HepG2 (cell line): ENCODE measurements at regions of chr14 and their contacts with region 1.

Region 1: DNA sequence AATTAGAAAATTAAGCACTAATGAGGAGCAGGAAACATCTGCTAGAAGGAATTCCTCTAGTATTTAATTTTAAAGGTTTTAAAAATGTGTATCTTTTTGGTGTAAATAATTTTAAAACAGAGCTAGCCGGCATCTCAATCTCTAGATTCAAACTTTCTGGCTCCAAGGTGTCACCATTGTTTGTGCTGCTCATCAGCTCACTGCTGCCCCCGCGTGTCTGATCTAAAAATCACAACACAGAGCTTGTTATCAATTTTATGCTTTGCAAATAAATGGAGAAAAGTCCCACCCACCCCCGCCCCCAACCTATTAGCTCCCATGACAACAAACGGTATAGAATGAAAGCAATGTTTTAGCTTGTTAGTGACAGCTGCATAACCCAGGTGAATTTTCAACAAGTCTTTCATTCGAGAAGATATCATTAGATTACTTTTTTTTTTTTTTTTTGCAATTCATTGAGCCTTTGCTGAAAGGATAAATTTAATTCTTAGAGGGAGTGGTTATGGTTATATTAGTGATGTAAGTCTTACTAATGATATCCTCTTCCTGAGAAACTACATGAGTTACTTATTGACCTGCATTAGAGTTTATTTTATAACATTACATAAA is 11.3 kb upstream of the ABHD12B start:
- DNase-seq: peak; percentile 66
- ATAC-seq: peak; percentile 39
- H3K4me3 ChIP-seq: peak overlapping the region; percentile 49 to 93 (median 77)
- H3K27ac ChIP-seq: no peak overlapping the region
- H3K4me1 ChIP-seq: peaks cover 28% of the 10 kb centered on the region
- H3K27me3 ChIP-seq: 0 out of 5 replicates have a peak, but pooled peaks cover 0 to 3% of the 10 kb centered on the region in 2 experiments
- CTCF ChIP-seq: peak; percentile 68
- EP300 ChIP-seq: no peak
- POLR2A ChIP-seq: no peak
- RAD21 ChIP-seq: peak; percentile 24; the same call in 1 of the 2 replicates

Region 2: DNA sequence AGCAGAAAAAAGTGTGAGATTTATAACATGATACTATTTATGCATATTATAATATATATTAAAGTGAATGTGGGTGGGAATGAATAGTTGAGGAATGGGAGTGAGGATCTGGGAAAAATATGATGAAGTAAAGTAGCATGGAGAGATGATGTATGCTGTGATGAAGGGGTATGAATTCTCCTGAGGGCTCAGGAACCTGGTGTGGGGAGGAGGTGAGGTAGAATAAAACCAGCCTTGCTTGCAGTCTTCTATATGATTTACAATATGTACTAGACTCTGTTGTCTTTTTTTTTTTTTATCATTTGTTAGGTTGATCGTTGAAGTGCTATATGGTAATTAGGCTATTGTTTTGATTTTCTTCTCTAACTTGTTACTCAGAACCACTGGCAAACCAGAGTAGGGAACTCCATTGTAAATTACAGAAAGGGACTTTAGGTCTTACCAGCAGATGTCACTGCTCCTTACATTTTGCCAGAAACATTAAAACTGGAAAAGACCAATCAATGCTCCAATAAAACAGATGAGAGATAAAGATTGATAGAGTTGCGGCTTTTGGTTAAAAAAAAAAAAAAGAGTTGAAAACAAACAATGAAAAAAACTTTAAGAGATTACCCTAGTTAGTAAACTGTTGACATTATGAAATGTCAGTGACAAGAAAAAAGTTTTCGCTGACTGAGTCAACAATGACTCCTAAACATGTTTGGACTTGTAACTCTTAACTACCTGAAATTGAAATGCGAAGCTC is 260.7 kb before region 1 on chr14:
- CTCF ChIA-PET with region 1: no interaction called
- POLR2A ChIA-PET with region 1: no interaction called
- in situ Hi-C with region 1: no loop called
- intact Hi-C with region 1: loop called (anchors 10 kb)
- DNase-seq: peak; percentile 36
- ATAC-seq: peak; percentile 68
- H3K4me3 ChIP-seq: peak overlapping the region in 1 of 3 experiments; percentile 24; a peak in 3 of 6 replicates
- H3K27ac ChIP-seq: peak overlapping the region; percentile 59
- H3K4me1 ChIP-seq: peaks cover 19% of the 10 kb centered on the region
- H3K27me3 ChIP-seq: no peaks in the 10 kb centered on the region
- CTCF ChIP-seq: peak; percentile 65
- EP300 ChIP-seq: peak in 1 of 2 experiments; percentile 64; a peak in 1 of 4 replicates
- POLR2A ChIP-seq: no peak
- RAD21 ChIP-seq: no peak

Region 3: DNA sequence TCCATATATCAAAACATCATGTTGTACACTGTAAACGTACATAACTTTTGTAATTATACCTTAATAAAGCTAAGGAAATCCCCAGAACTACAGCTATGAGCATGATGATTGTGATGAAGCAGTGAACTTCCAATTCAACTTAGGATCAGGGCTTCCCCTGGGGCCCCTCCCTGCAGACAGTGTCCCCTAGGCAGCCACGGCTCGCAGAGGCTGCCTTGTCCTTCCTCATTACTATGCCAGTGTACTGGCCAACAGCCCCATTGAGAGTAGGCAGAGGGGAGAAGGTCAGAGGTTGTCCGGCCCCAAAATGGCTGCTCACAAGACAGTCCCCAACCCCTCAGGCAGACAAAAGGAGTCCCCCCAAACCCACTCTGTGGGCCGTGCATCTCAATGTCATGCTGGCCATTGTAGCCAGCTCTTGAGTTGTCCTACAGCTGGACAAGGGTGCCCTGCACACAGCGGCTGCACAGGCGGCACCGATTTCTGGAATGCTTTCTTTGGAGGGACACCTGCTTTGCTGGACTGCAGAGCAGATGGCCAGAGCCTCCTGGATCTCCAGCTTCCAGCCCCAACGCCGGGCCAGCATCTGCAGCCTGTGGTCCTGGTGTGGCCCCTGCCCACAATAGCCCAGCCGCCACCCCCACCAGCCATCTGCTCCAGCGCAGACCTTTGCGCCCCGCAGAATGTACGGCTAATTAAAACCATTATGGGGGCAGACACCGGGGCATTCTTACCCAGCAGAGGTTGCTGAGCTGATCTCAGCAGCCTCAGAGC is 75.7 kb before region 1 on chr14:
- CTCF ChIA-PET with region 1: no interaction called
- POLR2A ChIA-PET with region 1: no interaction called
- in situ Hi-C with region 1: loop called (anchors 5 kb)
- intact Hi-C with region 1: no loop called
- DNase-seq: no peak
- ATAC-seq: no peak
- H3K4me3 ChIP-seq: no peak overlapping the region
- H3K27ac ChIP-seq: no peak overlapping the region
- H3K4me1 ChIP-seq: no peaks in the 10 kb centered on the region
- H3K27me3 ChIP-seq: no peaks in the 10 kb centered on the region
- CTCF ChIP-seq: no peak
- EP300 ChIP-seq: no peak
- POLR2A ChIP-seq: no peak
- RAD21 ChIP-seq: no peak

Region 4: GRCh38 chr14:50816395-50817047 is 44.1 kb before region 1 on chr14:
- CTCF ChIA-PET with region 1: no interaction called
- POLR2A ChIA-PET with region 1: no interaction called
- in situ Hi-C with region 1: no loop called
- intact Hi-C with region 1: no loop called
- DNase-seq: peak; percentile 34
- ATAC-seq: no peak
- H3K4me3 ChIP-seq: no peak overlapping the region
- H3K27ac ChIP-seq: no peak overlapping the region
- H3K4me1 ChIP-seq: peaks cover 12% of the 10 kb centered on the region
- H3K27me3 ChIP-seq: no peaks in the 10 kb centered on the region
- CTCF ChIP-seq: no peak
- EP300 ChIP-seq: no peak
- POLR2A ChIP-seq: no peak
- RAD21 ChIP-seq: no peak

Region 5: GRCh38 chr14:50839048-50839447 is 21.5 kb before region 1 on chr14:
- CTCF ChIA-PET with region 1: no interaction called
- POLR2A ChIA-PET with region 1: interaction called, 3 read pairs
- in situ Hi-C with region 1: no loop called
- intact Hi-C with region 1: loop called (anchors 2 kb)
- DNase-seq: peak; percentile 87
- ATAC-seq: peak; percentile 84
- H3K4me3 ChIP-seq: no peak overlapping the region
- H3K27ac ChIP-seq: no peak overlapping the region
- H3K4me1 ChIP-seq: peaks cover 58% of the 10 kb centered on the region
- H3K27me3 ChIP-seq: no peaks in the 10 kb centered on the region
- CTCF ChIP-seq: no peak
- EP300 ChIP-seq: peak in 1 of 2 experiments; percentile 64; a peak in 2 of 4 replicates
- POLR2A ChIP-seq: no peak
- RAD21 ChIP-seq: no peak

Region 6: DNA sequence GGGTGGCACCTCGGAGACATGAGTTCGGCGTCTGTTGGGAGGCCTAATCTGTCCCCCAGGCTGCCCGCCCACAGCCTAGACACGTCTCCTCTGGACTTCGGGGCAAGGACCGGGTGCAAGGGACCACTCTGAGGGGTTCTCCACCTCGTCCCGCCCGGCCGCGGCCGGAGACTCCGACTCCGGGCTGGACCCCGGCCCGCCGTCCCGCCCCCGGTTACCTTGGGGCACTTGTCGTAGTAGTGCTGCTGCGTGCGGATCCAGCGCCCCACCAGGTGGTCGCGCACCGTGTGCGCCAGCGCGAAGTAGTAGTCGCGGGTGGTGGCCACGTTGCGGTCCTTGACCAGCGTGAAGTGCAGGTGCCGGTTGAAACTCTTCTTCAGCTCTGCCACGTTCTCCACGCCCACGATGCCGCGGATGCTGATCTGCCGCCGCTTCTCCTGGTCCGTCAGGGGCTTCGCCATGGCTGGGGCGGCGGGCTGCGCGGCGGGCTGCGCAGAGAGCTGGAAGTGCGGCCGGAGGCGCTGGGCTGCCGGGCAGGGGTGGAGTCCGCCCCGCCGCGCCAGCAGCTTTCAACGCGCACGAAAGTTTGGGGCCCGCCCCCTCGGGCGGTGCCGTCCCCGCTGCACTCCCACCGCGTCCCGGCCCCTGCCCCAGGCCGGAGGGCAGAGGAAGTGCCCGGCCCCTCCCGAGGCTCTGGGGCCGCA is 83.5 kb after region 1 on chr14 and contains the start of gene PYGL:
- CTCF ChIA-PET with region 1: no interaction called
- POLR2A ChIA-PET with region 1: interaction called, 10 read pairs
- in situ Hi-C with region 1: no loop called
- intact Hi-C with region 1: no loop called
- DNase-seq: peak; percentile 55
- ATAC-seq: peak; percentile 88
- H3K4me3 ChIP-seq: peak within 1 kb of the TSS; percentile 84 to 92 (median 91)
- H3K27ac ChIP-seq: peak within 1 kb of the TSS; percentile 99
- H3K4me1 ChIP-seq: peaks cover 47% of the 10 kb centered on the region
- H3K27me3 ChIP-seq: no peaks in the 10 kb centered on the region
- CTCF ChIP-seq: peak; percentile 61
- EP300 ChIP-seq: no peak; a peak in 1 of 4 replicates
- POLR2A ChIP-seq: peak; percentile 65 to 89
- RAD21 ChIP-seq: peak; percentile 23
- total RNA-seq, gene PYGL: 110 and 138 TPM in 2 replicates